B cell (primary cell): ENCODE measurements at regions of chr3 and their contacts with region 1.

Region 1: GRCh38 chr3:98593046-98593936 is at the start of gene CPOX:
- DNase-seq: peak; percentile 79
- ATAC-seq: peak; percentile 93
- H3K4me3 ChIP-seq: peak within 1 kb of the TSS; percentile 63 to 90 (median 69)
- H3K4me3 Mint-ChIP-seq: peak within 1 kb of the TSS; percentile 98
- H3K27ac ChIP-seq: peak within 1 kb of the TSS; percentile 60 to 76
- H3K27ac Mint-ChIP-seq: peak within 1 kb of the TSS; percentile 87
- H3K4me1 ChIP-seq: peaks cover 9 to 20% of the 10 kb centered on the region in 2 donors
- H3K4me1 Mint-ChIP-seq: peaks cover 26% of the 10 kb centered on the region
- H3K27me3 ChIP-seq: no peaks in the 10 kb centered on the region
- H3K27me3 Mint-ChIP-seq: no peaks in the 10 kb centered on the region
- CTCF ChIP-seq: no peak
- total RNA-seq, gene CPOX: 17.5 and 22.0 TPM in 2 replicates

Region 2: GRCh38 chr3:97764407-97765238 is 828.7 kb before region 1 on chr3 and contains the start of gene ARL6:
- CTCF ChIA-PET with region 1: no interaction called
- POLR2A ChIA-PET with region 1: no interaction called
- intact Hi-C with region 1: loop called (anchors 1 kb)
- DNase-seq: peak; percentile 85
- ATAC-seq: peak; percentile 87
- H3K4me3 ChIP-seq: peak within 1 kb of the TSS; percentile 74 to 99 (median 96)
- H3K4me3 Mint-ChIP-seq: peak within 1 kb of the TSS; percentile 98
- H3K27ac ChIP-seq: peak within 1 kb of the TSS; percentile 69 to 74
- H3K27ac Mint-ChIP-seq: peak within 1 kb of the TSS; percentile 96
- H3K4me1 ChIP-seq: peaks cover 13% of the 10 kb centered on the region in 2 donors
- H3K4me1 Mint-ChIP-seq: peaks cover 30% of the 10 kb centered on the region
- H3K27me3 ChIP-seq: no peaks in the 10 kb centered on the region
- H3K27me3 Mint-ChIP-seq: no peaks in the 10 kb centered on the region
- CTCF ChIP-seq: no peak
- total RNA-seq, gene ARL6: 5.6 and 7.5 TPM in 2 replicates

Region 3: GRCh38 chr3:97971677-97972567 is 621.4 kb before region 1 on chr3 and contains the start of gene RIOX2:
- CTCF ChIA-PET with region 1: no interaction called
- POLR2A ChIA-PET with region 1: no interaction called
- intact Hi-C with region 1: loop called (anchors 10 kb)
- DNase-seq: peak; percentile 83
- ATAC-seq: peak; percentile 92
- H3K4me3 ChIP-seq: peak within 1 kb of the TSS; percentile 13 to 73 (median 64)
- H3K4me3 Mint-ChIP-seq: peak within 1 kb of the TSS; percentile 98
- H3K27ac ChIP-seq: peak within 1 kb of the TSS; percentile 49 to 77
- H3K27ac Mint-ChIP-seq: peak within 1 kb of the TSS; percentile 96
- H3K4me1 ChIP-seq: peaks cover 15 to 16% of the 10 kb centered on the region in 2 donors
- H3K4me1 Mint-ChIP-seq: peaks cover 38% of the 10 kb centered on the region
- H3K27me3 ChIP-seq: no peaks in the 10 kb centered on the region
- H3K27me3 Mint-ChIP-seq: no peaks in the 10 kb centered on the region
- CTCF ChIP-seq: no peak
- total RNA-seq, gene RIOX2: 23.6 and 27.8 TPM in 2 replicates

Region 4: DNA sequence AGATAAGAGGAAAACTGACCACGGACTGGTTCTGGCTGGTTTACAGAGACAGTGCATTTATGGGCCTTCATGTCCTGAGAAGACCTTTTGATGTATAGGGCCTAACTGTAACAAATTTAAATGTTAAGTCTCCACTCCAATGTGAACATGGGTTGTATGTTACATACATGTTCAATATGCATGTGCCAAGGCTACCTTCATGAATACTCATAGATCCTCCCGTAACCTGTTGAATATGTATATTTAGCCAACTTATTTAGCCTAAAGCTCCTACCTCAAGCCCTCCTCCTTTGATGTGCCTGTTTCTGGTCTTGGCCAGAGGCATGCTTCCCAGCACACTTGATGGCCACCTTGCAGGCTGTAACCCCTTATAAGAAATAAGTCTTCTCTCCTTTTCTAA is 311.1 kb before region 1 on chr3 and contains the start of gene OR5H2:
- CTCF ChIA-PET with region 1: no interaction called
- POLR2A ChIA-PET with region 1: no interaction called
- intact Hi-C with region 1: no loop called
- DNase-seq: no peak
- ATAC-seq: no peak
- H3K4me3 ChIP-seq: no peak within 1 kb of the TSS
- H3K4me3 Mint-ChIP-seq: no peak within 1 kb of the TSS
- H3K27ac ChIP-seq: no peak within 1 kb of the TSS
- H3K27ac Mint-ChIP-seq: no peak within 1 kb of the TSS
- H3K4me1 ChIP-seq: no peaks in the 10 kb centered on the region
- H3K4me1 Mint-ChIP-seq: no peaks in the 10 kb centered on the region
- H3K27me3 ChIP-seq: no peaks in the 10 kb centered on the region
- H3K27me3 Mint-ChIP-seq: no peaks in the 10 kb centered on the region
- CTCF ChIP-seq: no peak
- total RNA-seq, gene OR5H2: not detected in 2 replicates

Region 5: GRCh38 chr3:98817547-98818041 is 224.3 kb after region 1 on chr3:
- CTCF ChIA-PET with region 1: interaction called, 7 read pairs
- POLR2A ChIA-PET with region 1: no interaction called
- intact Hi-C with region 1: loop called (anchors 2 kb)
- DNase-seq: peak; percentile 52
- ATAC-seq: peak; percentile 56
- H3K4me3 ChIP-seq: no peak overlapping the region
- H3K4me3 Mint-ChIP-seq: no peak overlapping the region
- H3K27ac ChIP-seq: no peak overlapping the region
- H3K27ac Mint-ChIP-seq: no peak overlapping the region
- H3K4me1 ChIP-seq: no peaks in the 10 kb centered on the region
- H3K4me1 Mint-ChIP-seq: no peaks in the 10 kb centered on the region
- H3K27me3 ChIP-seq: no peaks in the 10 kb centered on the region
- H3K27me3 Mint-ChIP-seq: no peaks in the 10 kb centered on the region
- CTCF ChIP-seq: peak; percentile 89

Region 6: DNA sequence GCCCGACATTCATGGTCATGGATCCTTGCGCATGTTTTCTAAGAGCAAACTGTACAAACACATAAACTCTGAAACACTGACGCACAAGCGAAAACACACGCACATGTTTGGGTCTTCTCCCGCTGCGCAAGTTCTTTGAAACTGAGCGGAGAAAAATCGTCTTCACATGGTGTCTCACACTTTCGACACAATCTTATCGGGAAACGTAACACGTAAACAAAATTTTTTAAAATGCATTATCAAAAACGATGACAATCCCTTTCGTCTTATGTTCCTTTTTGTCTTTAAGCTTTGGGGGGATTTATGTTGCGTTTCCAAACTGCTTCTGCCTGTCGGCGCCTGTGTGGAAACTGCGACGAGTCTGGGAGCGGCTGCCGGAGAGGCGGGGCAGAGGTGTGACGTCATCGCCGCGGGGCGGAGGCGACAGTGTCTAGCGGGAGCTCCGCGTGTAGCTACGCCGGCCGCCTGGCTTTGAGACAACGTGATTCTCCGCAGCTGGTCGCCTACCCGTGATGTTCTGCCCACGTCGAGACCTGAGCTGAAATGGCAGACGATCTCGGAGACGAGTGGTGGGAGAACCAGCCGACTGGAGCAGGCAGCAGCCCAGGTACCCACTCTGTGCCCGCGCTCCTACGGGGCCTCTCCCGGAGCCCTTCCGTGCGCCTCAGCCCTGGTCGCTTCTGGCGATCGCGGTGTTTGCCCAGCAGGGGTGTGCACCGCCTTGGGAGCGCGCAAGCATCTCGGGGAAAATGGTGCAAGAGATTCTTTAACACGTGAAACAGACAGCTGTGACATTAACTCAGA is 1224.3 kb after region 1 on chr3 and contains the start of gene CMSS1:
- CTCF ChIA-PET with region 1: no interaction called
- POLR2A ChIA-PET with region 1: no interaction called
- intact Hi-C with region 1: loop called (anchors 10 kb)
- DNase-seq: peak; percentile 98
- ATAC-seq: peak; percentile 91
- H3K4me3 ChIP-seq: peak within 1 kb of the TSS; percentile 71 to 99 (median 89)
- H3K4me3 Mint-ChIP-seq: peak within 1 kb of the TSS; percentile 99
- H3K27ac ChIP-seq: peak within 1 kb of the TSS; percentile 85 to 91
- H3K27ac Mint-ChIP-seq: peak within 1 kb of the TSS; percentile 100
- H3K4me1 ChIP-seq: peaks cover 16 to 17% of the 10 kb centered on the region in 2 donors
- H3K4me1 Mint-ChIP-seq: peaks cover 39% of the 10 kb centered on the region
- H3K27me3 ChIP-seq: no peaks in the 10 kb centered on the region
- H3K27me3 Mint-ChIP-seq: no peaks in the 10 kb centered on the region
- CTCF ChIP-seq: no peak
- total RNA-seq, gene CMSS1: 22.0 and 22.8 TPM in 2 replicates